IMR-90 (cell line): ENCODE measurements at regions of chr3 and their contacts with region 1.

Region 1: GRCh38 chr3:126373682-126374601 is 16.7 kb upstream of the KLF15 start:
- DNase-seq: peak; percentile 43
- ATAC-seq: peak; percentile 44
- H3K4me3 ChIP-seq: no peak overlapping the region
- H3K27ac ChIP-seq: no peak overlapping the region
- H3K4me1 ChIP-seq: no peaks in the 10 kb centered on the region
- H3K27me3 ChIP-seq: peaks cover 27% of the 10 kb centered on the region
- CTCF ChIP-seq: no peak
- POLR2A ChIP-seq: no peak
- RAD21 ChIP-seq: no peak

Region 2: DNA sequence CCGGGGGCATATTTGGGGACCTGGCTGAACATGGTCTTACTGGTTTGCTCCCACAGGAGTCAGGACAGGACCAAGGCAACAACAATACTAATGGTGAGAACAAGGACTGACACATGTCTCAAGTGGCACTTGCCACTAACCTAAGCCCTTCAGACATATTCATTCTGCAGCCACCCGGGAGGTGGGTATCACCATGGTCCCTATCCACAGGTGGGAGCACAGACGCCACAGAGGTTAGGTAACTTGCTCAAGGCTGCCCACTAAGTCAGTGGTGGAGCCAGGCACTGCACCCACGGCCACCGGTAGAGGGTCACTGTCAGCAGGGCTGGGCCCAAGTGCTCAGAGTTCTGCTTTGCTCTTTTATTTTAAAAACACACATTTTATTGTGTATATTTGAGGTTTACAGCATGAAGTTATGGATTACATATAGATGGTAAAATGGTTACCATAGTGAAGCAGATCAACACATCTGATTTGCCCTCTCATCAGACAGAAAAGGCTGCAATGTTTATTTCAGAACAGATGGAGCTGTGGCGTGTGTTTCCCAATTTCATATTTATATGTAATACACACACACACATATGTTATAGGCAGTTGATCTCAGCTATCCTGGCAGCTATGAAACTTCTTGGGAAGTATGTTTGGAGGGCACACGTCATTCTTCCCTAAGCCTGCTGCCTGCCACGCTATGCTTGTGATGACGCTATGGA is 260.1 kb before region 1 on chr3:
- CTCF ChIA-PET with region 1: interaction called, 3 read pairs
- POLR2A ChIA-PET with region 1: no interaction called
- dilution Hi-C with region 1: no loop called
- in situ Hi-C with region 1: loop called (anchors 10 kb)
- intact Hi-C with region 1: no loop called
- DNase-seq: no peak
- ATAC-seq: peak; percentile 46; the same call in 1 of the 2 replicates
- H3K4me3 ChIP-seq: no peak overlapping the region
- H3K27ac ChIP-seq: no peak overlapping the region
- H3K4me1 ChIP-seq: no peaks in the 10 kb centered on the region
- H3K27me3 ChIP-seq: peaks cover 34% of the 10 kb centered on the region
- CTCF ChIP-seq: peak; percentile 29; the same call in 1 of the 2 replicates
- POLR2A ChIP-seq: no peak
- RAD21 ChIP-seq: peak; percentile 28

Region 3: GRCh38 chr3:126358038-126358815 is 15.7 kb before region 1 on chr3:
- CTCF ChIA-PET with region 1: no interaction called
- POLR2A ChIA-PET with region 1: no interaction called
- dilution Hi-C with region 1: no loop called
- in situ Hi-C with region 1: no loop called
- intact Hi-C with region 1: no loop called
- DNase-seq: no peak
- ATAC-seq: no peak
- H3K4me3 ChIP-seq: no peak overlapping the region
- H3K27ac ChIP-seq: no peak overlapping the region
- H3K4me1 ChIP-seq: peaks cover 3% of the 10 kb centered on the region; the same call in 1 of the 2 replicates
- H3K27me3 ChIP-seq: peaks cover 44% of the 10 kb centered on the region
- CTCF ChIP-seq: no peak
- POLR2A ChIP-seq: no peak
- RAD21 ChIP-seq: no peak